ENCODE measurements at regions of chr14 and their contacts with region 1.

Region 1: DNA sequence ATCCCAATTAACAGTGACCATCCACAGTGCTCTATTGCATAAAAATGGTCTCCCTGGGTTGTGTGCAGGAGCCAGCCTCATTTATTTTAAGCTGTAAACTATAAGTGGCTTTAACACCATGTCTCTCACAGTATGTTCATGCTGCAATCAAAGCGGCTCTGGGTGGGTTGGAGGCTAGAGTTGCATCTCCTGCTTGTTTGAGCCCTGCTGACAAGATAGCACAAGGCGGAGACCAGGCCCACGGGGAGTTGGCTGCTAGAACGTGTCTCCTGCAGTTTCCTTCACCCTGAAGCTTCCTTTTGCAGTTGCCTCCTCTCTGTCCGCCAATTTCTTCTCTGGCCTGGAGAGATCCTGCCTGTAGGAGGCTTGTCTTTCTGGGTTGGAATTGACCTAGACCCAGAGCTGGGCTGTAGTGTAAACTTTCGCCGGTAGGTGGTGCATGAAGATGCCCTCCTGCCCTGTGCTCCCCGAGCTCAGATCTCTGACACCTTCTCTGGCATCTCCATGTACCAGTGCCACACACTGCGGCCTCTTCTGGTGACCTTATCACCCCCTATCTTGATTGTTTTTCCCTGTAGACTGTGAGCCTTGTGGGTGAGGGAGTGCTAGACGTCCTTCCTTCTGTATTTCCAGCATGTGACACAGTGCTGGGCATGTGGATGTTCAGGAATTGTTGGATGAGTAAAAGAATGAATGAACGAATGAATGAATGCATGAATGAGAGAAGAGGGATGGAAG is 10.3 kb downstream of the OTUB2 start:
- DNase-seq: peak; percentile 60
- ATAC-seq: peak; percentile 95
- H3K4me3 Mint-ChIP-seq: no peak overlapping the region
- H3K27ac Mint-ChIP-seq: no peak overlapping the region
- H3K4me1 Mint-ChIP-seq: no peaks in the 10 kb centered on the region
- H3K27me3 Mint-ChIP-seq: no peaks in the 10 kb centered on the region
- CTCF ChIP-seq: peak; percentile 21

Region 2: GRCh38 chr14:94051115-94051514 is 14.6 kb after region 1 on chr14:
- CTCF ChIA-PET with region 1: interaction called, 11 read pairs
- POLR2A ChIA-PET with region 1: no interaction called
- intact Hi-C with region 1: no loop called
- DNase-seq: no peak
- ATAC-seq: no peak
- H3K4me3 Mint-ChIP-seq: no peak overlapping the region
- H3K27ac Mint-ChIP-seq: no peak overlapping the region
- H3K4me1 Mint-ChIP-seq: peaks cover 2% of the 10 kb centered on the region
- H3K27me3 Mint-ChIP-seq: no peaks in the 10 kb centered on the region
- CTCF ChIP-seq: no peak

Region 3: GRCh38 chr14:94136575-94137331 is 100.3 kb after region 1 on chr14:
- CTCF ChIA-PET with region 1: interaction called, 77 read pairs
- POLR2A ChIA-PET with region 1: interaction called, 4 read pairs
- intact Hi-C with region 1: loop called (anchors 1 kb)
- DNase-seq: peak; percentile 72
- ATAC-seq: peak; percentile 95
- H3K4me3 Mint-ChIP-seq: no peak overlapping the region
- H3K27ac Mint-ChIP-seq: no peak overlapping the region
- H3K4me1 Mint-ChIP-seq: peaks cover 3% of the 10 kb centered on the region
- H3K27me3 Mint-ChIP-seq: peaks cover 26% of the 10 kb centered on the region
- CTCF ChIP-seq: no peak

Region 4: DNA sequence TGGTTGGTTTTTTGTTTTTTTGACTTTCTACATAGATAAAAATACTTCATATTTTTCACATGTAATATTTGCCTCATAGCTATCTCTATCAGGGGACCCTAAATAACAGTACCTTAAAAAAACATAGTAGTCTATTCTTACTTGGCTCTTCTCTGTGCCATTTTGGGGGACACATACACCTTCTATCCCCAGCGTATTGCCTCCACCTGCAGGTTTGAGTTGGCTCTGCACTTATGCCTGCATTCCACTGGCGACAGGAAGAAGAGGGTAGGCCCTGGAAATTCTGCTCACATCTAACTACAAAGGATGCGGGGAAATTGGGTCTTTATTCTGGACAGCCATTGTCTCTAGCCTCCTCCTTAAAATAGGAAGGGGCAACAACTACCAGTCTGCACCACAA is 106.8 kb after region 1 on chr14:
- CTCF ChIA-PET with region 1: interaction called, 16 read pairs
- POLR2A ChIA-PET with region 1: no interaction called
- intact Hi-C with region 1: no loop called
- DNase-seq: no peak
- ATAC-seq: no peak
- H3K4me3 Mint-ChIP-seq: no peak overlapping the region
- H3K27ac Mint-ChIP-seq: no peak overlapping the region
- H3K4me1 Mint-ChIP-seq: no peaks in the 10 kb centered on the region
- H3K27me3 Mint-ChIP-seq: peaks cover 10% of the 10 kb centered on the region
- CTCF ChIP-seq: no peak

Region 5: GRCh38 chr14:94180655-94181271 is 144.3 kb after region 1 on chr14:
- CTCF ChIA-PET with region 1: interaction called, 67 read pairs
- POLR2A ChIA-PET with region 1: no interaction called
- intact Hi-C with region 1: loop called (anchors 1 kb)
- DNase-seq: no peak
- ATAC-seq: peak; percentile 66
- H3K4me3 Mint-ChIP-seq: no peak overlapping the region
- H3K27ac Mint-ChIP-seq: no peak overlapping the region
- H3K4me1 Mint-ChIP-seq: peaks cover 9% of the 10 kb centered on the region
- H3K27me3 Mint-ChIP-seq: peaks cover 39% of the 10 kb centered on the region
- CTCF ChIP-seq: peak; percentile 46

Measured in activated B cell treated with CpG ODN at 0.5 μM for 24 hours (primary cell).